ENCODE measurements at regions of chr6 and their contacts with region 1.

Region 1: DNA sequence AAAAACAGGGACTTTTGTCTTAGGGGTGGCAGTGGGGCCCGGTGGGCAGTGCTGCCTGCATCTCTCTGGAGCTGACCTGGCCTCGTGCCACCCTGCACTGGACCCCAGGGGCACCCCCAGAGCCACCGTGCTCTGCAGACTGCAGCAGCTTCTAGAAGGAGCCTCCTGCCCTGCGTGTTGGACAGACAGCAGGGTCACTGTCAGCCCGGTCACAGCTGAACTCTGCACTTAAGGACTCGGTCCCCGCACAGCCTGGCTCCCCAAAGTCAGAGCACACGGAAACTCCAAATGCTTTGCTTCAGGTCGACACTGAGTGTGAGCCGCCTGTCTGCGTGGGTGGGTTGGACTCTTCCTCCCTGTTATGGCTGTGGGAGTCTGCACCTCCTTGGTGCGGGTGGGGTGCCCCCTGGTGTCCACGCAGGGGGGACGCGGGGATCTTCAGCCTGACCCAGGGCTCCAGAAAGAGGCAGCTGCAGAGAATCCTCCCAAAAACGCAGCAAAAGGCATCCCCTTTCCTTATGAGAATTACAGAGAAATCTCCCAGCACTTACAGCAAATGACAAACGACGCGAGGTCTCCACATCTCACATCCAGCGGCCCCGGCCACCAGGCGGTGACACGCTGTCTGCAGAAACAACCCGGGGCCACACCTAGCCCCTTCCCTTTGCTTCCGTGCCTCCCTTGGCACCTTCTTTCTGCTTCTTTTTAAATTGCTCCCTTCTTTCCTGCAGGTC is 36.3 kb upstream of the DACT2 start:
- DNase-seq: peak; percentile 10
- ATAC-seq: peak; percentile 99
- H3K4me3 ChIP-seq: no peak overlapping the region
- H3K27ac ChIP-seq: no peak overlapping the region
- H3K4me1 ChIP-seq: no peaks in the 10 kb centered on the region; a peak in 1 of 4 replicates
- H3K27me3 ChIP-seq: no peaks in the 10 kb centered on the region
- CTCF ChIP-seq: peak; percentile 69 to 75 (median 71); a peak in 5 of 6 replicates
- POLR2A ChIP-seq: no peak
- RAD21 ChIP-seq: peak; percentile 80

Region 2: DNA sequence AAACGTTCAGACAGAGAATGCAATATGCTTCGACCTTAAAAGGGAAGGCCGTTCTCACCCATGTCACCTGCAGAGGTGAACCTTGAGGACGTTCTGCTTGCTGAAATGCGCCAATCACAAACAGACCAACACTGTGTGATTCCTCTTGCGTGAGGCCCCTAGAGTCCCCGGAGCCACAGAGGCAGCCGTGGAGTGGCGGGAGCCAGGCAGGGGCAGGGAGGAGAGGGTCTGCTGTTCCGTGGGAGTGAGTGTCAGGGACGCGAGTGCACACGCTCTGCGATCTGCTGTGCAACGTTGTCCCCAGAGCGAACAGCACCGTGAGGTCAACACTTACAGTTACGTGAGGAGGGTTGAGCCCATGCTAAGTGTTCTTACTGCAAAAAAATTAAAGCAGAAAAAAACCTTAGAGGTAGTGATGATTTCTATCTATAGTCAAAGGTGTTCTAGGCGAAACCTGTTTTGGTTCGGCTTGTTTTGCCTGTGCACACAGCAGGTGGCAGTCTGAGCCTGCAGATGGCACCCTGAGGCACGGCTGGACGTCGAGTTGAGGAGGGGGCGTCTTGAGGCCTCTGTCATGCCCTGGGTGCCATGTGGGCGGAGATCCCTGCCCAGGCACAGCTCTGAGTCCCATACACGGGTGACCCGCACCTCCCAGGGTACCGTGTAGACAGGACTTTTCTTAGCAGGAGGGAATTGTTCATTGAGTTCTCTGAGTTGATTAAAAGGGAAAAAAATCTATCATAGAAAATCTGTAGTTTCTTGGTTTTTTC is 205.1 kb before region 1 on chr6:
- CTCF ChIA-PET with region 1: no interaction called
- POLR2A ChIA-PET with region 1: no interaction called
- RAD21 ChIA-PET with region 1: no interaction called
- intact Hi-C with region 1: loop called (anchors 1 kb)
- DNase-seq: no peak
- ATAC-seq: peak; percentile 46; the same call in 1 of the 2 replicates
- H3K4me3 ChIP-seq: no peak overlapping the region
- H3K27ac ChIP-seq: no peak overlapping the region
- H3K4me1 ChIP-seq: peaks cover 0 to 12% of the 10 kb centered on the region in 2 experiments; a peak in 2 of 4 replicates
- H3K27me3 ChIP-seq: peaks cover 24% of the 10 kb centered on the region
- CTCF ChIP-seq: peak; percentile 25 to 56 (median 50); a peak in 4 of 6 replicates
- POLR2A ChIP-seq: no peak
- RAD21 ChIP-seq: peak; percentile 84

Region 3: GRCh38 chr6:168201383-168201782 is 154.5 kb before region 1 on chr6:
- CTCF ChIA-PET with region 1: no interaction called
- POLR2A ChIA-PET with region 1: no interaction called
- RAD21 ChIA-PET with region 1: no interaction called
- intact Hi-C with region 1: loop called (anchors 2 kb)
- DNase-seq: no peak
- ATAC-seq: peak; percentile 82
- H3K4me3 ChIP-seq: no peak overlapping the region
- H3K27ac ChIP-seq: no peak overlapping the region
- H3K4me1 ChIP-seq: no peaks in the 10 kb centered on the region
- H3K27me3 ChIP-seq: no peaks in the 10 kb centered on the region
- CTCF ChIP-seq: peak in 2 of 3 experiments; percentile 48 to 53; a peak in 4 of 6 replicates
- POLR2A ChIP-seq: no peak
- RAD21 ChIP-seq: peak; percentile 49

Measured in HCT116 (cell line).